Pancreas (tissue), 10 donors: ENCODE measurements at regions of chr6 and their contacts with region 1.

Region 1: DNA sequence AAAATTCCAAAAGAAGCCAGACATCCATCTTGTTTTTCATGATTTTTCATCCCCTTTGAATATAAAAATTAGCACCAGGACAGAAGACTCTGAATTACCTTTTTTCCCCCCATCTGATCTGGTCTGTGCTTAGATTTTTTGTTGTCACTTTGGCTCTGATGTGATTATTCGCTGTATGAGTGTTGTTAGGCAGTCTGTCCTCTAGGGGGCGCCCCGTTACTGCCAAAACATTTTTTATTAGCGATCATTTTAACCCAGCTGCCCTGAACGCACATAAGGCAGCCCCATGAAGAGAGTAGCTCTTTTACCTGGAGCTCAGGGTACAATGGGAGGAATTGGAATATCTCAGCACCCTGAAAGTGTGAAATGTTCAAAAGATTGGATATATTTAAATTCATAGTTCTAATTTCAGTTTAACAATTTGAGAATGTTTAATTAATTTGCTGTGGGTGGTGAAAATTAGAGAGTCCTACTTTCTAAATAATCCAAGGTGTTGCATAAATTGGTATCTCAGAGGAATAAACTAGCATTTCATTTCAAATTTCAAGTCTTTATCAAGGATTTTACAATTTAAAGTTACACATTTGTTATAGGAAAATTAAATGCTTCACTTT is 60.8 kb downstream of the PRPH2 start:
- DNase-seq: peak; percentile 62 to 88 (median 80)
- ATAC-seq: peak; percentile 90 to 97 (median 96)
- H3K4me3 ChIP-seq: no peak overlapping the region
- H3K27ac ChIP-seq: no peak overlapping the region
- H3K4me1 ChIP-seq: no peaks in the 10 kb centered on the region
- H3K27me3 ChIP-seq: no peaks in the 10 kb centered on the region
- CTCF ChIP-seq: peak; percentile 79 to 91 (median 84)

Region 2: DNA sequence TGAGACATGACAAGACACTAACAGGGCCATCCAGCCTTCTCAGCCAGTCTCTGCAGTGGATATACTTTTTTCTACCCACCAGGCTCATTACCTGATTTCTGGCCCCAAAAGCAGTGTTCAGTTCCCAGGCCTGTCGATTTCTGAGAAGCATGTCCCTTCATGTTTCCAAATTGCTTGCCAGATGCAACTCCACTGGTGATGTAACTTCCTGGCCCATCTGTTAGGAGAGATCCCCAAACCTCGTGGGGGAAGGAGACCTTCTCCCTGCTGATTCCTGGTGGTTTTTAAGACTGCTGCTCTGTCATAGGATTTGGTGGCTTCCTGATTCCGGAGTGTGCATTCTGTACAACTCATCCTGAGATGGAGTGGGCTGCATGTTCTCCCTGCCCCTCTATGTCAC is 412.4 kb before region 1 on chr6:
- intact Hi-C with region 1: no loop called
- DNase-seq: no peak
- ATAC-seq: no peak
- H3K4me3 ChIP-seq: no peak overlapping the region
- H3K27ac ChIP-seq: no peak overlapping the region
- H3K4me1 ChIP-seq: peaks cover 0 to 8% (median 4%) of the 10 kb centered on the region in 3 donors
- H3K27me3 ChIP-seq: no peaks in the 10 kb centered on the region
- CTCF ChIP-seq: no peak

Region 3: GRCh38 chr6:42735976-42736375 is 74.3 kb after region 1 on chr6:
- intact Hi-C with region 1: loop called in 1 of 3 experiments (anchors 5 kb)
- DNase-seq: no peak
- ATAC-seq: no peak
- H3K4me3 ChIP-seq: no peak overlapping the region
- H3K27ac ChIP-seq: no peak overlapping the region
- H3K4me1 ChIP-seq: no peaks in the 10 kb centered on the region
- H3K27me3 ChIP-seq: no peaks in the 10 kb centered on the region
- CTCF ChIP-seq: no peak

Region 4: DNA sequence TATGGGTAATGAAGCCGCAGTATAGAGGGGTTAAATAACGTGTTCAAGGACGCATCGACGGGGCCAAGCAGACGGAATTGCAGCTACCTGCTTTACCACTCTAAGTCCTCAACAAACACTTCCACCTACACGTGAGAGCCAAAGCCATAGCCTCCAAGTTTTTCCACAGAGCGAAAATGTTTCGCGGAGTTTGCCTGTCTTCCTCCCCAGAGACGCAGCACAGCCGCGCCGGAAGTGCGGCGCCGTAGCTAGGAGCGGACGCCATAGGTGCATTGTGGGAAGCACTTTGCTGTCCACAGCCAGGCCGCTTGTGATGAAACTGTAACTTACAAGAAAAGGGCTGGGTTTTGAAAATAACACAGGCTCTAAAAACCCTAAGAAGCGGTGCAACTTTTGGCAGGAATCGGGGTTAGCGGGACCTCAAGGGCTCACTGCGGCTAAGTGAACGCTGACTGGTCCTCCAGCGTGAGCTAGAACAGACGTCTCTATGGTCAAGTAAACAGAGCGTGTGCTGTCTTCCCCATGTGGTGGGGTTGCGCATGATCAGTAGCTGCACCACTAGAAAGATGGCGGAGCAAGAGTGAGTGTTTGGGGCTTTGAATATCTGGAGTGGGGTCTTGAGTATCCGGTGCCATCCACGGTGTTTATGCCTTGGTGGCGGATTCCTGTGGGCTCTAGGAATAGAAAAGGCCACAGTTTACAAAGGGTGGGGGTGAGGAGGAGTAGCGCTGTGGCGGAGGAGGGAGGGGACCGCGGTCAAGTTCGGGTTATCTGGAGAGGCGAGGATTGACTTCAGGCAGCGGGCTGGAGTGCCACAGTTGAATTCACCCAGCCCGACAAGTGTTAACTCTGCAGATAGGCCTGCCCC is 218.0 kb after region 1 on chr6 and contains the start of gene RPL7L1:
- intact Hi-C with region 1: loop called in 1 of 3 experiments (anchors 5 kb)
- DNase-seq: peak; percentile 73 to 88 (median 84)
- ATAC-seq: peak; percentile 95 to 98 (median 96)
- H3K4me3 ChIP-seq: peak within 1 kb of the TSS; percentile 33 to 64 (median 49)
- H3K27ac ChIP-seq: peak within 1 kb of the TSS; percentile 74 to 96 (median 92)
- H3K4me1 ChIP-seq: peaks cover 0 to 11% (median 5%) of the 10 kb centered on the region in 3 donors
- H3K27me3 ChIP-seq: no peaks in the 10 kb centered on the region
- CTCF ChIP-seq: peak in 1 of 4 donors; percentile 12
- total RNA-seq, gene RPL7L1: 23.7 to 43.9 (median 39.2) TPM